Transverse colon (tissue), 4 donors: ENCODE measurements at regions of chr10 and their contacts with region 1.

Region 1: GRCh38 chr10:17801507-17801906 is 7.6 kb upstream of the MRC1 start:
- DNase-seq: no peak
- H3K4me3 ChIP-seq: no peak overlapping the region
- H3K27ac ChIP-seq: no peak overlapping the region
- H3K4me1 ChIP-seq: peaks cover 0 to 5% (median 2%) of the 10 kb centered on the region in 4 donors
- H3K27me3 ChIP-seq: no peaks in the 10 kb centered on the region
- CTCF ChIP-seq: peak in 2 of 5 experiments; percentile 17 to 19
- EP300 ChIP-seq: no peak
- POLR2A ChIP-seq: no peak

Region 2: DNA sequence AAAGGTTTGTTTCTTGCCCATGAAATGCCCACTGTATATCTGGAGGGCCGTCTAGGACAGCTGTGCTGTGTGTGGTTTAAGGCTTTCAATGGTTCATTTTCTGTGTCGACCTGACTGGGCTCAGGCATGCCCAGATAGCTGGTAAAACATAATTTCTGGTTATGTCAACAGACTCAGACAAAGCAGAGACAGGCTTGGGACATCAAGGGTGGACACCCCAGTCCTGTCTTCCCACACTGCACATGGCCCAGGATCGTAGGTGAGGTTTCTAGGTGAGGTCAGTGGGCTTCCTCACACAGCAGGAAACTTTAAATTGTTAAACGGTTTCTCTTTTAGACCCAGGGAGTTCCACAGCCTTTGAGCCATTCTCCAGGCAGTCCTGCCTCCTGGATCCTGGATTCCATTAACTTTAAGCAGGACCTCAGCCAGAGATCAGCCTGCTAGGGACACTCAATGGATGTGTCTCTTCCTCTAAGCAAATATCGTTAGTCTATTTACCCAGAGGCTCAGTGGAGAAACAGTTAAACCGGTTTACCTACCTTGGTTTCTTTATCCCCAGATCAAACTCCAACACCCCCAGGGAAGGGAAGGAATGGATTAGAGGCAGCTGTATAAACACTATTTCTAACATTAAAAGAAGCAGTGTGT is 413.5 kb before region 1 on chr10:
- in situ Hi-C with region 1: no loop called
- intact Hi-C with region 1: no loop called
- DNase-seq: no peak
- H3K4me3 ChIP-seq: no peak overlapping the region
- H3K27ac ChIP-seq: peak overlapping the region in 2 of 4 donors; percentile 16 to 62
- H3K4me1 ChIP-seq: peaks cover 4 to 19% (median 11%) of the 10 kb centered on the region in 4 donors
- H3K27me3 ChIP-seq: no peaks in the 10 kb centered on the region
- CTCF ChIP-seq: no peak
- EP300 ChIP-seq: no peak
- POLR2A ChIP-seq: no peak

Region 3: DNA sequence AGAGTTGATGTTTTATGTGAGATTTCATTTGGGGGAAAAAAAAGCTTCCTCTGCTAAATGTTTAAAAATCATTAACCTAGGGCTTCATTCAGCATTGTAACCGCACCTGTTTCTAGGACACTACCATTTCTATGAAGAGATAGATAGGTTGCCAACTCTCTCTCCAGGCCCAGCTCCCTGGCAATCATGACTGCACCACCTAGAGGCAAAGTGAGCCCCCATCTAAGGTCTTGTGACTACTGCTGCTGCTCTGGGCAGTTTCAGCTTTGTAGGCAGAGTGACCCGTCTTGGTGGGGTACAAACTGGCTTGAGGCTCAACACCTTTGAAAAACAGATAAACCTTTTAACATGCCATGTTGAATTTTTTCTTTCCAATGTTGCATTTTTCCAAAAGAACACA is 19.6 kb before region 1 on chr10:
- in situ Hi-C with region 1: no loop called
- intact Hi-C with region 1: loop called (anchors 2 kb)
- DNase-seq: no peak
- H3K4me3 ChIP-seq: no peak overlapping the region
- H3K27ac ChIP-seq: no peak overlapping the region
- H3K4me1 ChIP-seq: peaks cover 0 to 11% (median 5%) of the 10 kb centered on the region in 4 donors
- H3K27me3 ChIP-seq: no peaks in the 10 kb centered on the region
- CTCF ChIP-seq: no peak
- EP300 ChIP-seq: no peak
- POLR2A ChIP-seq: no peak

Region 4: GRCh38 chr10:18955061-18955460 is 1153.6 kb after region 1 on chr10:
- in situ Hi-C with region 1: no loop called
- intact Hi-C with region 1: no loop called
- DNase-seq: no peak
- H3K4me3 ChIP-seq: no peak overlapping the region
- H3K27ac ChIP-seq: no peak overlapping the region
- H3K4me1 ChIP-seq: no peaks in the 10 kb centered on the region
- H3K27me3 ChIP-seq: no peaks in the 10 kb centered on the region
- CTCF ChIP-seq: no peak
- EP300 ChIP-seq: no peak
- POLR2A ChIP-seq: no peak